Caco-2 (cell line): ENCODE measurements at regions of chr11 and their contacts with region 1.

Region 1: GRCh38 chr11:34357701-34358257 is at the start of gene ABTB2:
- DNase-seq: peak; percentile 98 to 99
- H3K4me3 ChIP-seq: peak within 1 kb of the TSS; percentile 53
- H3K4me3 Mint-ChIP-seq: peak within 1 kb of the TSS; percentile 75
- H3K27ac Mint-ChIP-seq: peak within 1 kb of the TSS; percentile 53
- H3K4me1 ChIP-seq: peaks cover 7% of the 10 kb centered on the region; the same call in 1 of the 2 replicates
- H3K4me1 Mint-ChIP-seq: peaks cover 6% of the 10 kb centered on the region
- H3K27me3 ChIP-seq: peaks cover 4% of the 10 kb centered on the region
- H3K27me3 Mint-ChIP-seq: peaks cover 13% of the 10 kb centered on the region
- CTCF ChIP-seq: no peak
- total RNA-seq, gene ABTB2: 2.9 and 3.6 TPM in 2 replicates

Region 2: GRCh38 chr11:33996498-33997454 is 361.0 kb before region 1 on chr11:
- CTCF ChIA-PET with region 1: interaction called, 3 read pairs
- POLR2A ChIA-PET with region 1: no interaction called
- intact Hi-C with region 1: loop called (anchors 1 kb)
- DNase-seq: peak; percentile 81 to 85
- H3K4me3 ChIP-seq: peak overlapping the region; percentile 22
- H3K4me3 Mint-ChIP-seq: peak overlapping the region; percentile 63
- H3K27ac Mint-ChIP-seq: no peak overlapping the region
- H3K4me1 ChIP-seq: no peaks in the 10 kb centered on the region; the same call in 1 of the 2 replicates
- H3K4me1 Mint-ChIP-seq: peaks cover 13% of the 10 kb centered on the region
- H3K27me3 ChIP-seq: no peaks in the 10 kb centered on the region
- H3K27me3 Mint-ChIP-seq: peaks cover 4% of the 10 kb centered on the region
- CTCF ChIP-seq: peak; percentile 86 to 90

Region 3: GRCh38 chr11:34105079-34105956 is 252.5 kb before region 1 on chr11 and contains the start of gene NAT10:
- CTCF ChIA-PET with region 1: interaction called, 4 read pairs
- POLR2A ChIA-PET with region 1: no interaction called
- intact Hi-C with region 1: loop called (anchors 1 kb)
- DNase-seq: peak; percentile 97 to 99
- H3K4me3 ChIP-seq: peak within 1 kb of the TSS; percentile 74
- H3K4me3 Mint-ChIP-seq: peak within 1 kb of the TSS; percentile 94
- H3K27ac Mint-ChIP-seq: peak within 1 kb of the TSS; percentile 95
- H3K4me1 ChIP-seq: peaks cover 9% of the 10 kb centered on the region
- H3K4me1 Mint-ChIP-seq: peaks cover 19% of the 10 kb centered on the region
- H3K27me3 ChIP-seq: no peaks in the 10 kb centered on the region
- H3K27me3 Mint-ChIP-seq: no peaks in the 10 kb centered on the region
- CTCF ChIP-seq: no peak
- total RNA-seq, gene NAT10: 91.4 and 101 TPM in 2 replicates

Region 4: DNA sequence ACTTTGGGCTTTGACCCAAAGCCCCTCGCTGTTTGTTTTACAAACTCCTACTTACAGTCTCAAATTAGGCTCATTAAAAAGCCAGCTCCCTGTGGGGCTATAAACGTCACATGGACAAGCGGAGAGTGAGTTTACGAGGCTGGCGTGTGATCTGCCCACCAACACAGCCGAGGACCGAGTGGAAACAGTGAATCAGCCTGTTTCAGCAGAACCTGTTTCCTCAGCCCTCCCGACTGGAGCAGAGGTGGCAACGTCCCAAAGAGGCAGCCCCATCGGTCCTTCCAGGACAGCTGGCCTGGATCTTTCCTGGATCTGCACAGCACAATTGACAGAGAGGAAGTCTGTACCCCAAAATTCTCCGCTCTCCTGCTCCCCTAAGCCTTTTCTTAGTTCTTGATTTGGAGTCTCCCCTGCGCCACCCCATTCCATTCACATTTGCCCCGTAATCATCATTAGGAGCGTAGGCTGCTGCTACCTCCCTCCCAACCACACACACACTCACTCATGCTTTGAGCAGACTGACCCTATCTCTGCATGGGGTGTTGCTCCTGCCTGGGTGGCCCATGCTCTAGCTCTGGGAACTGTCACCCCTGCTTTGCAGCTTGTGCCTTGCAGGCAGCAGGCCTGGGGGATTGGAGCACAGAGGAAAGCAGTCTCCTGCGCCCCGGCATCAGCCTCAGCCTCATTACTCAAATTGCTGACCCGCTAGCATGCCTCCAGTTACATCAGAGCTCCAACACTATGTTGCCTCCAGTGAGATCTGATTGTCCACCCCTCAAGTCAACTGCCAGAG is 134.6 kb before region 1 on chr11:
- CTCF ChIA-PET with region 1: no interaction called
- POLR2A ChIA-PET with region 1: no interaction called
- intact Hi-C with region 1: loop called (anchors 5 kb)
- DNase-seq: no peak
- H3K4me3 ChIP-seq: no peak overlapping the region
- H3K4me3 Mint-ChIP-seq: no peak overlapping the region
- H3K27ac Mint-ChIP-seq: peak overlapping the region; percentile 0
- H3K4me1 ChIP-seq: peaks cover 9% of the 10 kb centered on the region
- H3K4me1 Mint-ChIP-seq: peaks cover 7% of the 10 kb centered on the region
- H3K27me3 ChIP-seq: no peaks in the 10 kb centered on the region
- H3K27me3 Mint-ChIP-seq: no peaks in the 10 kb centered on the region
- CTCF ChIP-seq: no peak

Region 5: GRCh38 chr11:34263440-34264172 is 94.2 kb before region 1 on chr11:
- CTCF ChIA-PET with region 1: interaction called, 4 read pairs
- POLR2A ChIA-PET with region 1: no interaction called
- intact Hi-C with region 1: loop called (anchors 5 kb)
- DNase-seq: peak; percentile 46 to 65
- H3K4me3 ChIP-seq: no peak overlapping the region
- H3K4me3 Mint-ChIP-seq: no peak overlapping the region
- H3K27ac Mint-ChIP-seq: no peak overlapping the region
- H3K4me1 ChIP-seq: no peaks in the 10 kb centered on the region
- H3K4me1 Mint-ChIP-seq: no peaks in the 10 kb centered on the region
- H3K27me3 ChIP-seq: no peaks in the 10 kb centered on the region
- H3K27me3 Mint-ChIP-seq: no peaks in the 10 kb centered on the region
- CTCF ChIP-seq: no peak

Region 6: DNA sequence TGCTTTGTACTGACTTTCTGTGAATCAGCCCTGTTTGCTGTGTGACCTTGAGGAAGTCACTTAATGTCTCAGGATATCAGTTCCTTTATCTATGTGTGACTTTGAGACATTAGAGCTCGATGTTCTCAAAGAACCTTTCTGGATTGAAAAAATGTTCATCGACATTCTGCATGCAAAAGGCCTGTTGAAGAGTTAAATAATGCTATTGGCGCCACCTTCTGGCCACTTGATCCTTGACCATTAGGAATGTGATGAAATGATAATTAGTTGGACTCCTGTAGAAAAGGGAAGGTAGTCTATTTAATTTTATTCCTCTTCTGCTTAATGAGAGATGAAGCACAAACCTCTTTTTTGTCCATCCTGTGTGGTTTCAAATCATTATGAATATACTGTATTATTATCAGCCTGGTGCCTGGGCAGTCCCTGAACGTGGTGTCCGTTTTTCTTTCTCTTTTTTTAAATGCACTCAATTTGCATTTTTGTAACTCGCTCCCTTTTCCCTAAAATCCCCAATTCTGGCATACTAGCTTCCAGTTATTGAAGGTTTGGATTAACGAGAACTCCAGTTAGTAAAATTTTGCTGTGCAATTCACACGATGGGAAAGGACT is 135.1 kb after region 1 on chr11:
- CTCF ChIA-PET with region 1: interaction called, 3 read pairs
- POLR2A ChIA-PET with region 1: no interaction called
- intact Hi-C with region 1: loop called (anchors 2 kb)
- DNase-seq: peak; percentile 60 to 63
- H3K4me3 ChIP-seq: no peak overlapping the region
- H3K4me3 Mint-ChIP-seq: no peak overlapping the region
- H3K27ac Mint-ChIP-seq: no peak overlapping the region
- H3K4me1 ChIP-seq: no peaks in the 10 kb centered on the region
- H3K4me1 Mint-ChIP-seq: no peaks in the 10 kb centered on the region
- H3K27me3 ChIP-seq: no peaks in the 10 kb centered on the region
- H3K27me3 Mint-ChIP-seq: peaks cover 4% of the 10 kb centered on the region
- CTCF ChIP-seq: peak; percentile 64 to 69

Region 7: GRCh38 chr11:34525887-34526636 is 168.3 kb after region 1 on chr11:
- CTCF ChIA-PET with region 1: no interaction called
- POLR2A ChIA-PET with region 1: no interaction called
- intact Hi-C with region 1: no loop called
- DNase-seq: no peak
- H3K4me3 ChIP-seq: no peak overlapping the region
- H3K4me3 Mint-ChIP-seq: no peak overlapping the region
- H3K27ac Mint-ChIP-seq: no peak overlapping the region
- H3K4me1 ChIP-seq: no peaks in the 10 kb centered on the region
- H3K4me1 Mint-ChIP-seq: no peaks in the 10 kb centered on the region
- H3K27me3 ChIP-seq: no peaks in the 10 kb centered on the region
- H3K27me3 Mint-ChIP-seq: peaks cover under 1% of the 10 kb centered on the region
- CTCF ChIP-seq: no peak